Left cardiac atrium (tissue), 4 donors: ENCODE measurements at regions of chr3 and their contacts with region 1.

Region 1: GRCh38 chr3:98784666-98785600 is 21.8 kb downstream of the ST3GAL6 start:
- DNase-seq: no peak
- ATAC-seq: peak; percentile 42 to 87

Region 2: GRCh38 chr3:98732286-98733052 is 52.5 kb before region 1 on chr3:
- intact Hi-C with region 1: loop called in 1 of 2 experiments (anchors 10 kb)
- DNase-seq: peak; percentile 62
- ATAC-seq: peak; percentile 75 to 84